Gastrocnemius medialis (tissue), 4 donors: ENCODE measurements at regions of chr11 and their contacts with region 1.

Region 1: DNA sequence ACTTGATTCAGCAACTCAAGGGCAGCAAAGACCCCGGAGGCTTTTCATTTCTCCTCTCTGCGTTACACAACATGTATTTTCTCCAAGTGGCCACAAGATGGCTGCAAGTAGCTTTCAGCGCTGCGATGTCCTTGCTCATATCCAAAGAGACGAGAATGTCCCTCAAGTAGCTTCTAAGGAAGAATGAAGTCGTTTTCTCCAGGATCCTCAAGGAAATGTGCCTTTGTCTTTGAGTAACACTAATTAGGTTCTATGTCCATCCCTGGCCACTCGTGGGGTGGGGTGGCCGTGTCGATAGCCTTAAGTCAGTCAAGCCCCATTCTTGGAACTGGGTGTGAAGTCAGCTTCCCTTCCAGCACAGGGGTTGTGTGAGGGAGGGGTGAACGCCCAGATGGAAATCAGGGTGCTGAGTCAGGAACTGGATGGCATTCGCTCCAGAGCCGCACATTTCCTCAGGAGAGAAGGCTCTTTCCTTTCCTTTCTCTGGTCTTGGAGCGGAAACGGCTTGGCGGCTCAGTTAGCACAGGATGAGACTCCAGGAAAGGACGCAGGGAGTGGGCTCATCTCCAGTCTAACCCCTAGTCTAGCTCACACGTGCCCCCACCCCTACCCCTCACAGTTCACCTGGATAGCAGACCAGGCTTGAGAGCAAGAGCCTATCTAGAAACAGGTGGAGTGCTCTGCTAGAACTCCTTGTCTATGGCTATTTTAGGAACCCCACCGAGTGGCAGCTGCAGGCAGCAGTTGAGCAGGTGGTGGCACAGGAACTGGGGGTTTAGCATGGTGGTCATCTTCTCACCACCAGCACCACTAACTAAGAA is 44.3 kb downstream of the NNMT start:
- DNase-seq: peak in 1 of 2 donors; percentile 47
- ATAC-seq: peak; percentile 70 to 88
- H3K4me3 ChIP-seq: peak overlapping the region in 3 of 4 donors; percentile 18 to 37 (median 34)
- H3K27ac ChIP-seq: peak overlapping the region in 3 of 4 donors; percentile 2 to 29 (median 14)
- H3K4me1 ChIP-seq: peaks cover 7 to 8% of the 10 kb centered on the region in 2 donors
- H3K27me3 ChIP-seq: no peaks in the 10 kb centered on the region
- CTCF ChIP-seq: peak; percentile 61 to 82 (median 79)
- POLR2A ChIP-seq: no peak

Region 2: DNA sequence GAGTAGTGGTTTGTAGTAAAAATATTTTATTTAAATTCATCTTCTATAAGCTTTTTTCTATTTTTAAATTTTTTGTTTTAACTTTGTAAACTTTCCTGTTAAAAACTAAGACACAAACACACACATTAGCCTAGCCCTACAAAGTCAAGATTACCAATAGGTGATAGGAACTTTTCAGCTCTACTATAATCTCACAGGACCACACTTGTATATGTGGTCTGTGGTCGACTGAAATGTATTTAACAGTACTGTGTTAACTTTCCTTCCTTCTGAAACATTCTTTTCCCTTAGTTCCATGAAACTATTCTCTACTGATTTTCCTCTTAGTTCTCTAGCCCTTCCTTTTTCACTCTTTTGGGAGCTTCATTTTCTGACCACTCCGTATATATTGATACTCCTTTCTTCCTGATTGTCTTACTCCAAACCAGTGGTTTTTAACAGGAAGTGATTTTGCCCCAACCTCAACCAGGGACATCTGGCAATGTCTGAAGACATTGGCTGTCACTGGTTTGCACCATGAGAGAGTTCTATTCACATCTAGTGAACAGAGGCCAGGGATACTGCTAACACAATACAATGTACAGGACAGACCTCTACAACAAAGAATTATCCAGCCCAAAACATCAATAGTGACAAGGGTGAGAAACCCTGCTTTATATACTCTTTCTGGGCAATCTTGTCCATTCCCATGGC is 575.8 kb before region 1 on chr11:
- in situ Hi-C with region 1: no loop called
- intact Hi-C with region 1: no loop called
- DNase-seq: no peak
- ATAC-seq: no peak
- H3K4me3 ChIP-seq: no peak overlapping the region
- H3K27ac ChIP-seq: no peak overlapping the region
- H3K4me1 ChIP-seq: no peaks in the 10 kb centered on the region
- H3K27me3 ChIP-seq: no peaks in the 10 kb centered on the region
- CTCF ChIP-seq: no peak
- POLR2A ChIP-seq: no peak

Region 3: GRCh38 chr11:114606003-114606801 is 265.7 kb after region 1 on chr11:
- in situ Hi-C with region 1: no loop called
- intact Hi-C with region 1: loop called (anchors 10 kb)
- DNase-seq: no peak
- ATAC-seq: no peak
- H3K4me3 ChIP-seq: no peak overlapping the region
- H3K27ac ChIP-seq: no peak overlapping the region
- H3K4me1 ChIP-seq: no peaks in the 10 kb centered on the region
- H3K27me3 ChIP-seq: no peaks in the 10 kb centered on the region
- CTCF ChIP-seq: no peak
- POLR2A ChIP-seq: no peak